ENCODE measurements at regions of chr2 and their contacts with region 1.

Region 1: GRCh38 chr2:160224060-160224459 is 24.0 kb upstream of the ITGB6 start:
- DNase-seq: peak; percentile 97
- H3K4me3 Mint-ChIP-seq: peak overlapping the region; percentile 48
- H3K27ac Mint-ChIP-seq: peak overlapping the region; percentile 99
- H3K4me1 Mint-ChIP-seq: peaks cover 92% of the 10 kb centered on the region
- H3K27me3 Mint-ChIP-seq: no peaks in the 10 kb centered on the region
- CTCF ChIP-seq: no peak

Region 2: GRCh38 chr2:160201849-160202539 is 22.1 kb before region 1 on chr2:
- CTCF ChIA-PET with region 1: interaction called, 39 read pairs
- POLR2A ChIA-PET with region 1: interaction called, 212 read pairs
- intact Hi-C with region 1: no loop called
- DNase-seq: no peak
- H3K4me3 Mint-ChIP-seq: no peak overlapping the region
- H3K27ac Mint-ChIP-seq: no peak overlapping the region
- H3K4me1 Mint-ChIP-seq: peaks cover 52% of the 10 kb centered on the region
- H3K27me3 Mint-ChIP-seq: no peaks in the 10 kb centered on the region
- CTCF ChIP-seq: no peak

Region 3: DNA sequence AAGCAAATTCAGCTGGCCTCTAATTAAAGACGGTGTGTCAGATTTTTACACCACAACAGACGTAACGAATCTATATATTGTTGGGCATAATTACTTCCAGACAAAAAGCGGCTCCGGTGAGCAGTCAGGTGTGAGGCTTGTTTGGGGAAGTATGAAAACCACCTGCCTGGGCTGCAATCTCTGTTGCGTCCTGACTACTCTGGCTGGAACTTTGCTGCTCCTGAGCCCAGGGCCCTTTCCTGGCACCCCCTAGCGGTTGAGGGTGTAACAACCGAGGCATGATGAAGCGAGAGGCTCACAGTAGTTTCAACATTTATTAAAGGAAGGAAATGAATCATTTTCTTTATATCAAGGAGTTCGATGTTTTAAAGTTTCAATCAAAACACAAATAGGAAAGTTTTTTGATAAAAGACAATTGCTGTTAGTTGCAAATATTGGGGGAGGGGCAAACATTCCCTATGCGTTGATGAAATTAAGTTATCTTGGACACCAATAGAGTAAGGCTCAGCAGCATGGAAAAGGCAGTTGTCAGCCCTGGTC is 13.4 kb before region 1 on chr2:
- CTCF ChIA-PET with region 1: interaction called, 39 read pairs
- POLR2A ChIA-PET with region 1: interaction called, 212 read pairs
- intact Hi-C with region 1: no loop called
- DNase-seq: peak; percentile 90
- H3K4me3 Mint-ChIP-seq: no peak overlapping the region
- H3K27ac Mint-ChIP-seq: peak overlapping the region; percentile 73
- H3K4me1 Mint-ChIP-seq: peaks cover 55% of the 10 kb centered on the region
- H3K27me3 Mint-ChIP-seq: no peaks in the 10 kb centered on the region
- CTCF ChIP-seq: peak; percentile 68

Region 4: GRCh38 chr2:160241251-160242137 is 17.4 kb after region 1 on chr2:
- CTCF ChIA-PET with region 1: interaction called, 5 read pairs
- POLR2A ChIA-PET with region 1: interaction called, 137 read pairs
- intact Hi-C with region 1: no loop called
- DNase-seq: peak; percentile 97
- H3K4me3 Mint-ChIP-seq: peak overlapping the region; percentile 18
- H3K27ac Mint-ChIP-seq: peak overlapping the region; percentile 93
- H3K4me1 Mint-ChIP-seq: peaks cover 65% of the 10 kb centered on the region
- H3K27me3 Mint-ChIP-seq: no peaks in the 10 kb centered on the region
- CTCF ChIP-seq: no peak

Region 5: GRCh38 chr2:160379427-160379826 is 155.4 kb after region 1 on chr2:
- CTCF ChIA-PET with region 1: no interaction called
- POLR2A ChIA-PET with region 1: no interaction called
- intact Hi-C with region 1: no loop called
- DNase-seq: peak; percentile 89
- H3K4me3 Mint-ChIP-seq: peak overlapping the region; percentile 52
- H3K27ac Mint-ChIP-seq: peak overlapping the region; percentile 36
- H3K4me1 Mint-ChIP-seq: peaks cover 52% of the 10 kb centered on the region
- H3K27me3 Mint-ChIP-seq: no peaks in the 10 kb centered on the region
- CTCF ChIP-seq: no peak

Measured in MCF 10A (cell line).